ENCODE measurements at regions of chr1 and their contacts with region 1.

Region 1: GRCh38 chr1:89605692-89606091 is 27.2 kb upstream of the LRRC8C start:
- DNase-seq: no peak
- H3K4me3 Mint-ChIP-seq: no peak overlapping the region
- H3K27ac Mint-ChIP-seq: peak overlapping the region; percentile 99
- H3K4me1 Mint-ChIP-seq: peaks cover 92% of the 10 kb centered on the region
- H3K27me3 Mint-ChIP-seq: no peaks in the 10 kb centered on the region

Region 2: DNA sequence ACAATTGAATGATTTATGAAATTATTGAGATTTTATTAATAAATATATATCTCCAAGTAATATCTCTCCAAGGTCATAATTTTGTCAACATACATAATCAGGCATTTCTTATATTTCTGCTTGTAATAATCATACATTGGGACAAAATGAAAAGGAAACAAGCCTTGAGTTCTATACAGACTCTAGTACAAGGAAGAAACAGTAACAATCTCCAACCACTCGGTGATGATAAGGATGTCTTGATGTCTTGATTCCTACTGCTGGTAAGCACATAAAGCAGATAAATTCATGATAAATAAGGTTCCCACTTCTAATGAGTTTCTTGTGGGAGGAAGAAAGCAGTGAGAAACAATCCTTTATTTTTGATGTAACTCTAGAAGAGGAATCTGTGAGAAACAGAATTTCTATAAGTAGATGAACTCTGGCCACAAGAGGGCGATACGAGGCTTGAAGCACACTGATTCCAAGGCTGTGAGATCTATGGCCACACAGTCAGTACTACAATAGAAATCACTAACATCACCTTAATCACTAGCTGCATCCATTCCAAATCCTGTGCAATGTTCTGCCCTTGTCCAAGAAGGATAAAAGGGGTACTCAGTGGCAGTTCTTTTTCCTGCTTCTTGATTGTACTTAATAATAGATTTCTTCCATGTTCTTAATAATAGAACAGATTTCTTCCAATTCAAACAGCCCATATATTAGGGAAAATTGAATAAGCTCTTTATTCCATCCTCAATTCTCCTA is 122.5 kb before region 1 on chr1:
- CTCF ChIA-PET with region 1: interaction called, 19 read pairs
- POLR2A ChIA-PET with region 1: interaction called, 3 read pairs
- DNase-seq: peak; percentile 82
- H3K4me3 Mint-ChIP-seq: no peak overlapping the region
- H3K27ac Mint-ChIP-seq: no peak overlapping the region
- H3K4me1 Mint-ChIP-seq: peaks cover 14% of the 10 kb centered on the region
- H3K27me3 Mint-ChIP-seq: no peaks in the 10 kb centered on the region

Region 3: GRCh38 chr1:89615676-89616598 is 10.2 kb after region 1 on chr1:
- CTCF ChIA-PET with region 1: interaction called, 26 read pairs
- POLR2A ChIA-PET with region 1: interaction called, 828 read pairs
- DNase-seq: no peak
- H3K4me3 Mint-ChIP-seq: no peak overlapping the region
- H3K27ac Mint-ChIP-seq: no peak overlapping the region
- H3K4me1 Mint-ChIP-seq: peaks cover 83% of the 10 kb centered on the region
- H3K27me3 Mint-ChIP-seq: no peaks in the 10 kb centered on the region

Region 4: DNA sequence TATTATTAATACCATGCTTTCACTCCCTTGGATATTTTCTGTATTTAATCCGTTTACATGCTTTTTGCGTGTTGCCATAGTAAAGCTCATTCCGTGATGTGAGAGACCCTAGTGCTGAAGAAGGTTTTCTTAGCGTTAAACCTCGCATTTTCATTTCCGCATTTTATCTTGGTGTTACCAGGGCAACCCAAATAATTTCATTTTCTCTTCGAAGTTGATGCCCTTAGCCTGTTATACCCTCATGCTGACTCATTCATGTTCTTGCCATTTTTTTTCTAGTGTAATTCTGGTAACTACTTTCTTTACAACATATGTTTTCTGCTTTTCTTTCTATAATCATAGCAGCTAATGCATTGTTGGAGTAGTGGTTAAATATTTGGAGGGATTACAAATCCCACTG is 64.5 kb after region 1 on chr1:
- CTCF ChIA-PET with region 1: interaction called, 6 read pairs
- POLR2A ChIA-PET with region 1: interaction called, 10 read pairs
- DNase-seq: no peak
- H3K4me3 Mint-ChIP-seq: peak overlapping the region; percentile 56
- H3K27ac Mint-ChIP-seq: peak overlapping the region; percentile 71
- H3K4me1 Mint-ChIP-seq: peaks cover 89% of the 10 kb centered on the region
- H3K27me3 Mint-ChIP-seq: no peaks in the 10 kb centered on the region

Region 5: DNA sequence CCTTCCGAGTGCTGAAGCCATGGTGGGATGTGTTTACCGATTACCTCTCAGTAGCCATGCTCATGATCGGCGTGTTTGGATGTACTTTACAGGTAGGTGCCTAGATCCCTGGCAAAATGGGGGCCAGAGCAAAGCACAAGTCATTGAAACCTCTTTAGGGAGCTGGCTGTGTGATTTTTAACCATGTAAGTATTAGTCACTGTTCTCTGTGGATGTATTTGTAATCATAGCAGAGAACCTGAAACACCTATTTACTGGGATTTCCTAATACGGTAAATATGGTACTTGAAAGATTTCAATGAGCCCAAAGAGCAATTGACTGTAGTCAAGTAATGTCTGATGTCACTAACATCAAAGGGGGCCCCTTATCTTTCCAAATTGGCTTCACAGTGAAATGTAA is 80.8 kb after region 1 on chr1:
- CTCF ChIA-PET with region 1: no interaction called
- POLR2A ChIA-PET with region 1: no interaction called
- DNase-seq: no peak
- H3K4me3 Mint-ChIP-seq: no peak overlapping the region
- H3K27ac Mint-ChIP-seq: no peak overlapping the region
- H3K4me1 Mint-ChIP-seq: peaks cover 50% of the 10 kb centered on the region
- H3K27me3 Mint-ChIP-seq: no peaks in the 10 kb centered on the region

Region 6: DNA sequence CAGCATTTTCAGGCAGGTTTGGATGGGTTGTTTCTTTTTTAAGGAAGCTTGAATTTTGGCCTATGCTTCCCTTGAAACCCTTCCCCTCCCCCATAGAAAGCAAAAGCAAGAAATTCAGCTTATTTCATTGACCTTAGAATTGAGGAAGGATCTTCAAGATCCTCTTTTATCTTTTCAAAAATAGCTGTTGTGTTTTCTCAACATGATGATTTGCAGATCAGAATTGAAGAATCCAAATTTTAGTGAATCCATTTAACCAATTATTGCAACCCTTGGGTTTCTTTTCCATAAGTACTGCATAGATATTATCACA is 101.0 kb after region 1 on chr1:
- CTCF ChIA-PET with region 1: no interaction called
- POLR2A ChIA-PET with region 1: no interaction called
- DNase-seq: no peak
- H3K4me3 Mint-ChIP-seq: no peak overlapping the region
- H3K27ac Mint-ChIP-seq: no peak overlapping the region
- H3K4me1 Mint-ChIP-seq: peaks cover 34% of the 10 kb centered on the region
- H3K27me3 Mint-ChIP-seq: no peaks in the 10 kb centered on the region

Region 7: GRCh38 chr1:89757532-89757931 is 151.8 kb after region 1 on chr1:
- CTCF ChIA-PET with region 1: interaction called, 62 read pairs
- POLR2A ChIA-PET with region 1: interaction called, 73 read pairs
- DNase-seq: peak; percentile 65
- H3K4me3 Mint-ChIP-seq: peak overlapping the region; percentile 67
- H3K27ac Mint-ChIP-seq: peak overlapping the region; percentile 92
- H3K4me1 Mint-ChIP-seq: peaks cover 90% of the 10 kb centered on the region
- H3K27me3 Mint-ChIP-seq: no peaks in the 10 kb centered on the region

Measured in activated CD4-positive, alpha-beta memory T cell treated with anti-CD3 and anti-CD28 coated beads, Interleukin-2, amount 10 ng/mL, durations not matched to agents 7 days and 5 days (primary cell).